Motor neuron (in vitro differentiated cells): ENCODE measurements at regions of chr3 and their contacts with region 1.

Region 1: DNA sequence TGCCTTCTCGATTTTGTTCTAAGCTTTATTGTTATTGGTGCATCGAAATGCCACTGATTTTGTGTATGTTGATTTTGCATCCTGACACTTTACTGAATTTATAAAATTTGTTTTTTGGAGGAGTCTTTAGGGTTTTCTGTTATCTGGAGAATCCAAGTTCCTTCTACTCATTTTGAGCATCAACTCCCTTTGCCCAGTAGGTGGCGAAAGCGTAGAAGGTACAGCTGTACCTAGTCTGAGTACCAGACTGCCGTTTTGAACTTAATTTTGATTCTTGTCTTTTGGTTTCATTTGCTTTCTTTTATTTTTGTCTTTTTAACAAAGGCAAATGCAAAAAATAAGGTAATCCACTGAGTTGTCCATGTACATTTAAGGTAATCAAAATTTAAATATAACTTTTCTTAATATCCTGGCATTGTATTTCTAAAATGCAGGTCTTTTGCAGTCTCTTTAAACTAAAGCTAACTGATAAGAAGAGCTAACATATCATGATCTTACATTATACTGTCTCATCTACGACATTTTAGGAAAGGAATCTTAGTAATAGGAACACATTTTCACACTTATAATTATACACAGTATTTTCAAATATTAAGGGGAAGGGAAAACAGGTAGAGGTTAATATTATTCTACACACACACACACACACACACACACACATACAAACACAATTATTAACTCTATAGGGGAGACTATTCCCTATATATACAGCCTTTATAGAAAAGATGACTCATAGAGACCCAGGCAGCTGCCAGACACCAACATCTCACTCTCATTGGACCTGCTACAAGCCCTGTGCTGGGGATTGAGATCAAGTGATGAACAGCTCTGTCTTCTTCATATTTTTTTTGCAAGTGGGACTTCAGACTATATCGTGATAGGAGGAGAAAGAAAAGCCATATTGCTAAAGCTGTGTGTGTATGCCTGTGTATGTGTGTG is 71.7 kb downstream of the SYNPR start:
- ATAC-seq: peak; percentile 40 to 87 (median 64)
- H3K4me3 ChIP-seq: no peak overlapping the region
- H3K27ac ChIP-seq: no peak overlapping the region
- H3K4me1 ChIP-seq: peaks cover 4 to 5% of the 10 kb centered on the region in 2 donors

Region 2: GRCh38 chr3:63557912-63558311 is 208.1 kb after region 1 on chr3:
- in situ Hi-C with region 1: loop called in 1 of 9 experiments (anchors 25 kb)
- ATAC-seq: no peak
- H3K4me3 ChIP-seq: no peak overlapping the region
- H3K27ac ChIP-seq: no peak overlapping the region
- H3K4me1 ChIP-seq: peaks cover 3 to 7% of the 10 kb centered on the region in 2 donors

Region 3: GRCh38 chr3:63576901-63577335 is 227.1 kb after region 1 on chr3:
- in situ Hi-C with region 1: loop called in 2 of 9 experiments (anchors 25 kb)
- ATAC-seq: no peak
- H3K4me3 ChIP-seq: no peak overlapping the region
- H3K27ac ChIP-seq: no peak overlapping the region
- H3K4me1 ChIP-seq: no peaks in the 10 kb centered on the region

Region 4: GRCh38 chr3:63818281-63819150 is 468.7 kb after region 1 on chr3:
- in situ Hi-C with region 1: loop called (anchors 10 to 25 kb)
- ATAC-seq: peak; percentile 7 to 58 (median 52)
- H3K4me3 ChIP-seq: no peak overlapping the region
- H3K27ac ChIP-seq: no peak overlapping the region
- H3K4me1 ChIP-seq: peaks cover 12% of the 10 kb centered on the region in 2 donors

Region 5: DNA sequence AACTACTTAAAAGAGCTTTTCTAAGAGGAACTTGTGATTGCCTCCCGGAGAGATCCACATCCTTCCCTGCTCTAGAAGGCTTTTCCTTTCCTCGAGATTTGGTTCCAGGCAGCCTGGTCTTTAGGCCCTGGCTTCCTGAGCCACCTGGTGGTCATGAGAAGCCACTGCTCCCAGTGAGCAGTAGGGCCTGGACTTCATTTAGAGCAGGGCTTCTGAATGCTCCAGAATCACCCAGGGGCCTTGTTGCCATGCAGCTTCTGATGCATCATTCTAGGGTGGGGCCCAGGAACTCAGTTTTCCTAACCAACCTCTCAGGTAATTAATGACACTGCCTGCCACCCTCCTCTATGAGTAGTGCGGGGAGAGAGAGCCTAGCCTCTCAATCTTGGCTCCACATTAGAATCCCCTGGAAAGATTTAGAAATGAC is 643.8 kb after region 1 on chr3:
- in situ Hi-C with region 1: loop called in 1 of 9 experiments (anchors 25 kb)
- ATAC-seq: peak; percentile 81 to 99 (median 95)
- H3K4me3 ChIP-seq: no peak overlapping the region
- H3K27ac ChIP-seq: no peak overlapping the region
- H3K4me1 ChIP-seq: no peaks in the 10 kb centered on the region